ENCODE measurements at regions of chr7 and their contacts with region 1.

Region 1: DNA sequence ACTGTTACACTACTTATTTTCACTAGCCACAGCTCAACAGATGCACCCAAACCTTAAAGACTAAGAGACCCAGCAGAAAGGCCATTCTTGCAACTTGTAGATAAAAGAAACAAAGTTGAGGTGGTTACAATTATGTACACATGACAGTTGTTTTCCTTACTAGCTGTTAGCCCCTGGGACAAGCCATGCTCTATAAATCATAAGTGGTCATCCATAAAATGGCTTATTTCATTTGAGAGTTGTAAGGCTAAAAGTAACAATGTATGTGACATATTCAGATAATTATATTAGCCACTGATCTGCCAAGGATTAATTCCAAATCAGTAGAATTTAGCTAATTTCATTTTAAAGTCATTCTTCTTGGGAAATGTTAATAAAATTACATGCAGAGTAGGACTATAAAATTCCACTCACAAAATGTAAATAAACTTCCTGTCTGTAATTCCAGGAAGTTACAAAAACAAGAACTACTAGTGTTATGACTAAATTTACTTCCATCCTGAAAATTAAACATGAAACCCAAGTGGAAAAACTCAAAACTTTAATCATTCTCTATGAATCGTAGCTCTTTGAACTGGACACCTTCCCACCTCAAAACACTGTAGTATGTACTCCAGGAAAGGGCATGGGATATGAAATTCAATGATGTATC is 13.3 kb downstream of the SLC37A3 start:
- DNase-seq: no peak
- ATAC-seq: no peak
- H3K4me3 Mint-ChIP-seq: no peak overlapping the region
- H3K27ac Mint-ChIP-seq: peak overlapping the region; percentile 73
- H3K4me1 Mint-ChIP-seq: peaks cover 27% of the 10 kb centered on the region
- H3K27me3 Mint-ChIP-seq: no peaks in the 10 kb centered on the region
- CTCF ChIP-seq: no peak

Region 2: GRCh38 chr7:140284062-140284461 is 101.0 kb before region 1 on chr7:
- CTCF ChIA-PET with region 1: no interaction called
- POLR2A ChIA-PET with region 1: no interaction called
- intact Hi-C with region 1: no loop called
- DNase-seq: no peak
- ATAC-seq: no peak
- H3K4me3 Mint-ChIP-seq: no peak overlapping the region
- H3K27ac Mint-ChIP-seq: no peak overlapping the region
- H3K4me1 Mint-ChIP-seq: no peaks in the 10 kb centered on the region
- H3K27me3 Mint-ChIP-seq: no peaks in the 10 kb centered on the region
- CTCF ChIP-seq: no peak

Region 3: GRCh38 chr7:140397784-140398750 is 13.0 kb after region 1 on chr7 and contains the start of gene SLC37A3:
- CTCF ChIA-PET with region 1: interaction called, 3 read pairs
- POLR2A ChIA-PET with region 1: interaction called, 12 read pairs
- intact Hi-C with region 1: no loop called
- DNase-seq: peak; percentile 90
- ATAC-seq: peak; percentile 89
- H3K4me3 Mint-ChIP-seq: peak within 1 kb of the TSS; percentile 88
- H3K27ac Mint-ChIP-seq: peak within 1 kb of the TSS; percentile 91
- H3K4me1 Mint-ChIP-seq: peaks cover 24% of the 10 kb centered on the region
- H3K27me3 Mint-ChIP-seq: no peaks in the 10 kb centered on the region
- CTCF ChIP-seq: no peak
- total RNA-seq, gene SLC37A3: 30.7 to 33.6 TPM

Region 4: GRCh38 chr7:140593672-140593982 is 208.6 kb after region 1 on chr7:
- CTCF ChIA-PET with region 1: no interaction called
- POLR2A ChIA-PET with region 1: no interaction called
- intact Hi-C with region 1: no loop called
- DNase-seq: peak; percentile 45
- ATAC-seq: peak; percentile 30
- H3K4me3 Mint-ChIP-seq: no peak overlapping the region
- H3K27ac Mint-ChIP-seq: no peak overlapping the region
- H3K4me1 Mint-ChIP-seq: peaks cover 11% of the 10 kb centered on the region
- H3K27me3 Mint-ChIP-seq: peaks cover 7% of the 10 kb centered on the region
- CTCF ChIP-seq: no peak

Measured in activated CD8-positive, alpha-beta T cell treated with anti-CD3 and anti-CD28 coated beads for 36 hours (primary cell).